BJ (cell line): ENCODE measurements at regions of chr12 and their contacts with region 1.

Region 1: DNA sequence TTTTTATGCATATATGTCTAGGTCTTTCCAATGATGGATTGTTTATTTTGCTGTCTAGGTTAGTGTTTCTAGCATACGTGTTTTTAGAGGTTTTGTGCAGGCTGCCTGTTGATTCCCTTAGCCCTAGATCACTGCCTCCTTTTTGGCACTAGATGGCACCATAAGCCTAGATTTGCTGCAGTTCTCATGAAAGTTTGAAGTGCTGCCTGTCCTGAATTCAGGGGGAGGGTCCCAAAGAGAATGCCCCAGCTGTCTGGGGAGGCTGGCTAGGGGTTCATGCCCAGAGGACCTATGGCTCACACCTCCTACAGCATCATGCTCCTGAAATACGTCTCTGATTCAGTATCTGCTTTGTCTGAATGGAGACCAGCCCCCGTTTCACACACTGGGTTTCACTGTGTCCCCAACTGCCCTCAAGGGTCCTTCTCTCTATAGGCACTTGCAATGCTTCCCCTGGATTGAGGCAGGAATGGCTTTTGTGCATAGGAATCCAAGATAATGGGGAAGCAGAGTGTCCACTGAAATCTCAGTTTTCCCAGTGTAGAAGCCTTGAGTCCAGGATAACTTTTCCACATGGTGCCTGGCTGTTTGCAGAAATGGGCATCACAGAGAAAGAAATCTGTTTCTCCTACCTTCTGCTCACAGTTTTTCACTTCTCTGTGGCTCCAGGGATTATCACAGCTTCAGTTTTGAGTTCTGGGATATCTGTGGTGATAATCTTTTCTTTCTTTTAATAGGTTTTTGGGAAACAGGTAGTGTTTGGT is 14.2 kb upstream of the TXNRD1 start:
- DNase-seq: no peak
- H3K4me3 ChIP-seq: no peak overlapping the region
- H3K27me3 ChIP-seq: no peaks in the 10 kb centered on the region
- CTCF ChIP-seq: peak; percentile 85

Region 2: GRCh38 chr12:103901518-103902173 is 299.8 kb before region 1 on chr12:
- CTCF ChIA-PET with region 1: no interaction called
- POLR2A ChIA-PET with region 1: no interaction called
- DNase-seq: no peak
- H3K4me3 ChIP-seq: no peak overlapping the region
- H3K27me3 ChIP-seq: peaks cover 4% of the 10 kb centered on the region; the same call in 1 of the 2 replicates
- CTCF ChIP-seq: no peak

Region 3: DNA sequence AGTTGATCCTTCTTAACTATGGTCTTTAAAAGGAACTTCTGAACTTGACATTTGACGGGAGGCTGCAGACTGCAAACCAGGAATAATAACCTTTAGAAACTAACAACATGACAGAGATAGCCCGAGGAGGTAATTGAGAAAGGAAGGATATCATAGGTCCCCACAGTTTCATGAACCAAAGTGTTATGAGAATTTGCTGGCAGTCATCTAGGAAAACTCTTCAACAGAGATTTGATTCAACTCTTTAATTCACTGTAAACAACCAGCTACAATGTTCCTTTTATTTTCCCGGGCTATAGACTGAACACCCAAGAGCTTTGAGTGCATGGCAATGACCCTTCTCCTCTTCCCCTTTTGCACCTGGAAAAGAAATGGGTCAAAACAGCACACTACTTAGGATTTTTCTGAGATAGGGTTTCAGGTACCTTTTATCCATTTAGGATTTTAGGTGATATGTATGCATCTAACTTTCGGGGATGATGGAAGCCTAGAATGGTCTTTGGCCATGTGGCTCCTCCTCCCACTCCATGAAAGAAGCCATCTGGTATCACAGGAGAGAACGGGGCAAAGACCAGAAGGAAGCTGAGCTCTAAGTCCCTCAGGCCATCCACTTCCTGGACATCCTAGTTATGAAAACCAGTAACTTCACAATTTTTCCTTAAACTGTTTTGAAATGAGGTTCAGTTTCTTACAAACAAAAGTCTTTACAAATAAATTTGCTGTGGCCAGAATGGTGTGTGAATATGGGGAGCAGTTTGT is 174.4 kb before region 1 on chr12:
- CTCF ChIA-PET with region 1: no interaction called
- POLR2A ChIA-PET with region 1: no interaction called
- DNase-seq: no peak
- H3K4me3 ChIP-seq: no peak overlapping the region
- H3K27me3 ChIP-seq: no peaks in the 10 kb centered on the region
- CTCF ChIP-seq: no peak

Region 4: DNA sequence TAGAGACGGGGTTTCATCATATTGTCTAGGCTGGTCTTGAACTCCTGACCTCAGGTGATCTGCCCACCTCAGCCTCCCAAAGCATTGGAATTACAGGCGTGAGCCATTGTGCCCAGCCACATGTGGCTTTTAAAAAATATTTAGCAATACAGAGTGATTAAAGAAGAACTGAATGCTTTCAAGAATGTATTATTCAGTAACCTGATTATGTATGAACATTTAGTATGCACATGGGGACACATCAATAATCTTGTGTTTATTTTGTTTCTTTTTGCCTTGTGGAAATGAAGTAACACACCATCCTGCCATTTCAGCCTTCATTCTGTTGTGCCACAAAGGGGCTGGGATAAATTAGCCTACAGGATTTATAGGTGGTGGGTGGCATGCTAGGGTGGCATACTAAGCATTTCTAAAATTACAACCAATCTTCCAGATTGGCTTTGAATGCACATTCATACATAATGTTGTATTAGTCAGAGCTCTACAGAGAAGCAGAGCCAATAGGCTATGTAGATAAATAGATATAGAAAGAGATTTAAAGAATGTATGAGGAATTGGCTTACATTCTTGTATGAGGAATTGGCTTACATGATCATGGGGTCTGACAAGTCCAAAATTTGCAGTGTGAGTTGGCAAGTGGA is 11.4 kb before region 1 on chr12:
- CTCF ChIA-PET with region 1: interaction called, 10 read pairs
- POLR2A ChIA-PET with region 1: no interaction called
- DNase-seq: no peak
- H3K4me3 ChIP-seq: no peak overlapping the region
- H3K27me3 ChIP-seq: no peaks in the 10 kb centered on the region
- CTCF ChIP-seq: no peak